RWPE1 (cell line): ENCODE measurements at regions of chr9 and their contacts with region 1.

Region 1: DNA sequence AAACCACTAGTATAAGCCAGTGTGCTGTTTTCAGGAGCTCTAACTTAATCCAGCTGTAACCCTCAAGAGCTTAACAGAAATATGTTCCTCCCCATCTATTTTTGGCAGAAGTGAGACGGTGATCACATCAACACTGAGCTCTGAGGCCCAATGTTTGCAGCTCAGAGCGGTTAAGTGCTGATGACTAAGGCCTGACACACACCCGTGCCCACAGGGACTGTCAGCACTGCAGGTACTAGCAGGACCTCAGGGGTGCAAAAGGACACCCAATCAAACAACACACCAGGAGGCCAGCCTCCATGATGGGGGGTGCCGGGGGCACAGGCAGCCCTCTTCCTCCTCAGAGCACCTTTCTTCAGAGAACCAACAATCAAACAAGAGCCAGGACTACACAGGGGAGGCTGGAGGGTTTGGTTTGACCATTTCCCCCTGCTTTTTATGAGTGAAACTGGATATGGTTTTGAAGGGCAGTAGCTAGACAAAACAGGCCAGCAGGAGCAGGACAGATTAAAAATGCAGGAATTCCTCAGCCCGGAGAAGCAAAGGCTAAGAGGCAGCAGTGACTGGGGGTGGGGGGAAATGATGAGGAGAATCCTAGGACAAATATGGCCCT is 61.3 kb downstream of the RAPGEF1 start:
- DNase-seq: peak; percentile 100
- H3K27ac ChIP-seq: peak overlapping the region; percentile 94
- CTCF ChIP-seq: no peak

Region 2: DNA sequence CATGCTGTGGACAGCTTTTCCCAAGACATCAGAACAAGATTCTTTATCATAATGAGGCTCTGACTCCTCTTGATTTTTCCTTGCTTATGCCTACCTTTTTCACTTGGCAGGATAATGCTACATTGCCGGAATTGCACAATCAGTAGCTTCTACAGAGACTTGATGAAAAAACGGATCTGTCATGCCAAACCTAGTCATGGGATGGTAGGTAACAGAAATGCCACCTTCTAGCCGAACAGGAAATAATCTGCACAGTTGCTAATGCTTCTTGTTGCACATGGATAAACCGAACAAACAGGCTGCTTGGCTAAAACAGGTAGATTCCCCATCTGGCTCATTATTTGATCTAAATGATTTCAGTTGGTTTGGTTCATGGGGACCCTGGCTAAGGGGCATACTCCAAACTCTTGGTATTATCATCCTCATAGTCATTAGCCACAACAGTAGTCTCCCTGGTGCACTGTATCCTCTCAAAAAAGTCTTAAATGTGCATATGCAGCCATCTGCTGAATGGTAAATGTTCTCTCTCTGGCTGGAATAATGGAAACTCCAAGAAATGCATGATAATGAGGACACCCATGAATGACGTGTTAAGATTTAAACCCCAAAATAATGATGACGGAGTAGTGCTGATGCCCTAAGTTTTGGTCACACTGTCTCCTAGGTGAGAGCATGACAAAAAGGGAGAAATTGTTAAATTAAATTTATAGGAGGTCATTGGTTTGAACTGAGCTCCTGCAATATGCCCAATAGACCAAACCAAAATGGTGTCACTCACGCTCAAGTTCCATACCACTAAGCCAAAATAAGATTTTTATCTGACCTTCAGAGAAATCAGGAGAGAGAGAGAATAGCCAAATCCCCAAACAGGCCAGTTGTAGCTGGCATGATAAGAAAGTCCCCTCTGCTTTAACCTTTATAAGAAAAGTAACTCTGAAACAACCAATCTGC is 14.3 kb after region 1 on chr9:
- CTCF ChIA-PET with region 1: interaction called, 10 read pairs
- POLR2A ChIA-PET with region 1: no interaction called
- DNase-seq: no peak
- H3K27ac ChIP-seq: no peak overlapping the region
- CTCF ChIP-seq: no peak

Region 3: GRCh38 chr9:131773911-131774379 is 95.3 kb after region 1 on chr9:
- CTCF ChIA-PET with region 1: no interaction called
- POLR2A ChIA-PET with region 1: no interaction called
- DNase-seq: peak; percentile 82
- H3K27ac ChIP-seq: no peak overlapping the region
- CTCF ChIP-seq: no peak